Head of caudate nucleus (tissue), 42 donors: ENCODE measurements at regions of chr3 and their contacts with region 1.

Region 1: DNA sequence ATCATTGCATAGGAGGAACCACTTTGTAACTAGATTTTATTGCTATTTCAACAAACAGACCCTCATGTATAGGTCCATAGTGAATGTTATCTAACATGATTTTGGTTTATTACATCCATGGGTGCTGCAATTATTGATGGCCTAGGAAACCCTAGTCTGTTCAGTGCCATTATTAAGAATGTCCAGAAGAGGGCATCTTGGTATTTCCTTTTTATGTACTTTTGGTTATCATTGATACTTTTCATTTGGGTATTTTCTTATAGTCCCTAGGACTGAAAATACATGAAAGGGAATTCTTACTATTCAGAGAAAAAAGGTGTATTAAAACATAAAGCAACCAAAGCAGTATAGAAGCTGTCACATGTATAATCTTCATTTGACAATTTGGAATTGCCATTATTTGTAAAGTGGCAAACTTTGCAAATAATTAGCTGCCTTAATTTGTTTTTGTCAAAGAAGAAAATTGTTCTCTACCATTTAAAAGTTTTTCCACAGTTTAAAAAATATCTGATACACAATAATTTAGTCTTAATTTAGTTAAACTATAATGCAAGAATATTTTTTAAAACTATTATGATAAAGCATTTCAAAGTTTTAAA is 48.7 kb downstream of the CNOT10 start:
- DNase-seq: no peak

Region 2: DNA sequence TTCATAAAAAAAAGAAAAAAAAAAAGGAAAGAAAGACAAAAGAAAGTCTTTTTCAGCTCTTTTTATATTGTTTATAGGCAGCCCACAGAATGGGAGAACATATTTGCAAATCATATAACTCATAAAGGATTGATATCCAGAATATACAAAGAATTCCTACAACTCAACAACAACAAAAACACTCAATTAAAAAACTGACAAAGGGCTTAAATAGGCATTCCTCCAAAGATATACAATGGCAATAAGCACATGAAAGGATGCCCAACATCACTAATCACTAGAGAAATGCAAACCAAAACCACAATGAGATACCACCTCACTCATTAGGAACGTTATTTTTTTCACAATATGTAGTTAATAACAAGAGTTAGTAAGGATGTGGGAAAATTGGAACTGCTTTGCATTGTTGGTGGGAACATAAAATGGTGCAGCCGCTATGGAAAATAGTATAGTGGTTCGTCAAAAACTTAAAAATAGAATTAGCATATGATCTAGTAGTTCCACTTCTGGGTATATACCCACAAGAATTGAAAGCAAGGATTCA is 549.5 kb before region 1 on chr3:
- intact Hi-C with region 1: no loop called
- DNase-seq: no peak

Region 3: GRCh38 chr3:32684800-32685542 is 48.8 kb before region 1 on chr3 and contains the start of gene CNOT10:
- intact Hi-C with region 1: no loop called
- DNase-seq: peak; percentile 92 to 98 (median 97)

Region 4: GRCh38 chr3:32825601-32826375 is 92.1 kb after region 1 on chr3:
- intact Hi-C with region 1: no loop called
- DNase-seq: no peak

Region 5: GRCh38 chr3:32934150-32934742 is 200.5 kb after region 1 on chr3:
- intact Hi-C with region 1: loop called (anchors 10 kb)
- DNase-seq: peak in 24 of 42 donors; percentile 7 to 56 (median 23)